Adrenal gland (tissue), 19 donors: ENCODE measurements at regions of chr4 and their contacts with region 1.

Region 1: DNA sequence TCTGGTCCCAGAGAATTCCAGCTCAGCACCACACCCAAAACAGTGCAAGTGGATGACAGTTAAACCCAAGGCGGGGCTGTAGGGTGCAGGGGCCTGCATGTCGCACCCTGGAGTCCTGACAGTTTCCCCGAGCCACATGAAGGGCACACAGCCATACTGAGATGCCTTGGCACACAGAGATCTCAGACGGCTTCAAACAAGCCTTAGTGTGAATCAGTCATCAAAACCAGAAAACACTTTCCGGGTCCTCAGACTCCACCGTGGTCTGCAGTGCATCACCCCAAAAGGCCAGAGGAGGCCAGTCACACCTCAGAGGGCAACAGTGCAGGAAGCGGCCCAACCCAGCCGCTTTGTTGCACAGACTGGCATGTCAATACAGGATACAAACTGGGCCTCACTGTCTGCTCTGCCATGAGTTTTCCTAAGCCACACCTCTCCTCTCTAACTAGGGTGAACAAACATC is 64.6 kb upstream of the ENPP6 start:
- DNase-seq: peak in 1 of 7 donors; percentile 48
- H3K4me3 ChIP-seq: no peak overlapping the region
- H3K27ac ChIP-seq: no peak overlapping the region
- H3K4me1 ChIP-seq: peaks cover under 1 to 11% of the 10 kb centered on the region in 2 donors
- H3K27me3 ChIP-seq: no peaks in the 10 kb centered on the region
- CTCF ChIP-seq: no peak
- POLR2A ChIP-seq: no peak

Region 2: DNA sequence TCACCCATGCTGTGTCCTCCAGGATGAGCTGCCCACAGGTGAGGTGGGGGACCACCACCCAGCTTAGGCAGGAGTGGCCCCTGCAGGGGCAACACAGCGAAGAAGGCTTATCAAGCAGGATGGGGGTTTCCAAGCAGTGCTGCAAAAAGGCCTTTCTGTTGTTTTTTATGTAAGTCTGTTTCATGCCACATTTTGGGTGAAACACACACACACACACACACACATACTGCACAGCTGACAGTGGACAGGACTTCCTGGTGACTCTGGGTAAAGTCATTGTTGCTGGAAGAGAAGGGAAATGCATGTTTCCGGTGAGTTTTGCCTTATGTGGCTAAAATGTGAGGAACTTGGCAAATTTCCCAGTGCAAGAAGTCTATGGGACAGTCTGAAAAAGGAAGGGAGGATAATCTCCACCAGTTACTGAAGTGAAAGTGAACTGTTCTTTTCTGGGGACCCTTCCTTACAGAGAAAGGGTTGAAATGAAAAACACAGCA is 72.9 kb after region 1 on chr4:
- intact Hi-C with region 1: no loop called
- DNase-seq: peak; percentile 55 to 88 (median 59)
- H3K4me3 ChIP-seq: no peak overlapping the region
- H3K27ac ChIP-seq: peak overlapping the region in 4 of 5 donors; percentile 56 to 88 (median 65)
- H3K4me1 ChIP-seq: peaks cover 7 to 9% of the 10 kb centered on the region in 2 donors
- H3K27me3 ChIP-seq: no peaks in the 10 kb centered on the region
- CTCF ChIP-seq: no peak
- POLR2A ChIP-seq: no peak

Region 3: GRCh38 chr4:184384056-184384809 is 102.0 kb after region 1 on chr4:
- intact Hi-C with region 1: loop called in 1 of 2 experiments (anchors 10 kb)
- DNase-seq: peak in 6 of 7 donors; percentile 57 to 82 (median 72)
- H3K4me3 ChIP-seq: peak overlapping the region in 1 of 4 donors; percentile 30
- H3K27ac ChIP-seq: peak overlapping the region; percentile 32 to 91 (median 85)
- H3K4me1 ChIP-seq: peaks cover 21 to 50% of the 10 kb centered on the region in 2 donors
- H3K27me3 ChIP-seq: no peaks in the 10 kb centered on the region
- CTCF ChIP-seq: no peak
- POLR2A ChIP-seq: peak in 1 of 2 donors; percentile 78

Region 4: DNA sequence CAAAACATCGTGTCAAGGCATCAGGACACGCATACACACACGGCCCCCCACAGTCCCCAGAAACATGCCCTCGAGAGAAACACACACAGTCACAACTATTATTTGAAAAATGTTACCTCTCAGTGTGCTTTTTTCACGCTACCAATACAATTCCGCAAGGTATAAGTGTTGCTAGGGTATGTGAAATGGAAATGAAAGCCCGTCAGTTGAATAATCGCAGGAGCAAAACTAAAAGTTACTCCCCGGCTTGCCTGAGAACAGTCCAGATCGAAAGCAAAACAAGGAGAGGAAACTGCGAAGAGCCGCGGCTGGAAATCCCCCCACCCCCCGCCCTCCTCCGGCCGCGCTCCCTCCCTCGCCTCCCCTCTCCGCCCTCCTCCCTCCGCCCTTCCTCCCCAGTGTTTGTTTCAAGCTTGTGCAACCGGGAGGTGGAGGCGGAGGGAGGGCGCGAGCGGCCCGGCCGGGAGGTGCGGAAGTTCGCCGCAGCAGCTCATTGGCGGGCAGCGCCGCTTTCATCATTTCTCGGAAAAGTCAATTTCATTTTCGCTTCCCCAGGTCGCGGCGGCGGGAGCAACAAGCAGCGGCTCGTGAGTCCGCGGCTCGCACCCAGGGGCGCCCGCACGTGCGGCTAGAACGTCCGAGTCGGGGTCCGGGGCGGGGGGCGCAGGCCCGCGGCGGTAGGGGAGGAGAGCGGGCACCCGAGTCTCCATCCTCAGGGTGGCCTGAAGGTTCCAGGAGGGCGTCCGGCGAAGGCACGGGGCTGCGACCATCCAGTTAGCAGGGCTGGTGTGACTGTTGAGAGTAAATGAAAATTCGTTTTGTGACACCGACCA is 192.2 kb after region 1 on chr4 and contains the start of gene IRF2:
- intact Hi-C with region 1: loop called in 1 of 2 experiments (anchors 10 kb)
- DNase-seq: peak; percentile 97 to 99 (median 98)
- H3K4me3 ChIP-seq: peak within 1 kb of the TSS; percentile 74 to 98 (median 89)
- H3K27ac ChIP-seq: peak within 1 kb of the TSS; percentile 96 to 99 (median 99)
- H3K4me1 ChIP-seq: peaks cover 30 to 56% of the 10 kb centered on the region in 2 donors
- H3K27me3 ChIP-seq: no peaks in the 10 kb centered on the region
- CTCF ChIP-seq: peak in 3 of 6 experiments; percentile 33 to 50 (median 36)
- POLR2A ChIP-seq: peak; percentile 86 to 97
- total RNA-seq, gene IRF2: 34.6 to 93.1 (median 57.1) TPM

Region 5: GRCh38 chr4:184680698-184681097 is 398.4 kb after region 1 on chr4:
- intact Hi-C with region 1: no loop called
- DNase-seq: no peak
- H3K4me3 ChIP-seq: no peak overlapping the region
- H3K27ac ChIP-seq: no peak overlapping the region
- H3K4me1 ChIP-seq: no peaks in the 10 kb centered on the region
- H3K27me3 ChIP-seq: no peaks in the 10 kb centered on the region
- CTCF ChIP-seq: no peak
- POLR2A ChIP-seq: no peak

Region 6: DNA sequence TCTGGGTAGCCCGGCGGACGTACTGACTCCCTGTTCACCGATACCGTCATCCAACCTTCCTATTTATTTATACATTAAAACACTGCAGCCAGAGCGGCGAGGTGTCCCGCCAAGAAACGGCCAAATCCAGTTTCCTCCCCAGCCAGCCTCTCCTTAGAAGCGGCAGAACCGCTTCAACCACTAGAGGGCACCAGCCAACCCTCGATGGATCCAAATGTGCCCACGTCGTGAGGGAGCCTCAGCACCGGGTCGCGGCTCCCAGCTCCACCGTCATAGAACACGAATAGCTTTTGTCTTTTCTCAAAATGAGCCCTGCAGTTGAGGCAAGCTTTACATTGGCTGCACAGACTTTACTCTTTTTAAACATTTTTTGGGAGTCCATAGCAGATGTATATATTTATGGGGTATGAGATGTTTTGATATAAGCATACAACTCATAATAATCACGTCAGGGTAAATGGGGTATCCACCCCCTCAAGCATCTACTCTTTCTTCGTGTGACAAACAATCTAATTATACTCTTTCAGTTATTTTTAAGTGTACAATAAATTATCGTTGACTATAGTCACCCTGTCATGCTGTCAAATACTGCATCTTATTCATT is 723.0 kb after region 1 on chr4:
- intact Hi-C with region 1: no loop called
- DNase-seq: peak; percentile 71 to 92 (median 85)
- H3K4me3 ChIP-seq: peak overlapping the region in 1 of 4 donors; percentile 14
- H3K27ac ChIP-seq: no peak overlapping the region
- H3K4me1 ChIP-seq: peaks cover 5 to 12% of the 10 kb centered on the region in 2 donors
- H3K27me3 ChIP-seq: peaks cover 10% of the 10 kb centered on the region
- CTCF ChIP-seq: peak; percentile 70 to 90 (median 84)
- POLR2A ChIP-seq: no peak